ENCODE measurements at regions of chr20 and their contacts with region 1.

Region 1: DNA sequence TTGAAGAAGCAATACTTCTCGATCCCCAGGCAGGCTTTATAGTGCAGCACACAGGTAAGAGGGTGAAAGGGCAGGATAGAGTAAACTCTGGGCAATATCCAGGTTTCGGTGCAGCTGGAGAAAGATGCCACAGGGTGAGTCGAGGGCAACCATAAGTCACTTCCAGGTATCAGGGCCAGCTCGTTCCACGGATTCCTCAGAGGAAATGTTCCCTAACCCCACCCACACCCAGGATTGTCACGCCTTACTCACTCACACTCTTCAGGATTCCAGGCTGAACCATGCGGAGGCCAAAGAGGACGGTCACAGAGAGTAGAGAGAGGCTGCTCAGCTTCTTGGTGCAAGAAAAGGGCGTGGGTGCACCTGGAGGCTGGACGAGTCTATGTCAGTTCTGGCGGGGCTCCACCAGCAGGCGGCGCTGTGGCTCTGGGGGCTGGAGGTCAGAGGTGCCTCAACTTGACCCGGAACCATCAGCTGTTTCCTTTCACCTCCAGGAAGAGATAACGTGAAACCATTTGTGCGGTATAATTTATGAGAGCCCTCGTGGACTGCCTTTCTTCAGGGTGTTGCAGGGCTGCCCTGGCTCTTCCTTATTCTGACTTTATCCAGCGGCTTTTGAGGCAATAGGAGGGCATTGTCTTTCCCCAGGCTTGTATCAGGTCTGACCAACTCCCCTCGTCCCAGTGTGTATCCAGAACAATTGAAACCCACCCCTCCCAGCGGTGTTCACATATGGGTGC is 14.5 kb upstream of the WFDC12 start:
- DNase-seq: peak; percentile 56 to 99
- H3K4me3 ChIP-seq: no peak overlapping the region
- H3K27ac ChIP-seq: no peak overlapping the region
- H3K4me1 ChIP-seq: no peaks in the 10 kb centered on the region
- H3K27me3 ChIP-seq: no peaks in the 10 kb centered on the region
- CTCF ChIP-seq: peak; percentile 95 to 99 (median 97)
- EP300 ChIP-seq: no peak
- POLR2A ChIP-seq: no peak
- RAD21 ChIP-seq: peak; percentile 88 to 92

Region 2: GRCh38 chr20:45095753-45096371 is 42.9 kb before region 1 on chr20:
- CTCF ChIA-PET with region 1: interaction called, 16 read pairs
- POLR2A ChIA-PET with region 1: no interaction called
- DNase-seq: peak in 1 of 2 experiments; percentile 76
- H3K4me3 ChIP-seq: no peak overlapping the region
- H3K27ac ChIP-seq: no peak overlapping the region
- H3K4me1 ChIP-seq: peaks cover 0 to 7% (median 2%) of the 10 kb centered on the region in 4 experiments; a peak in 5 of 7 replicates
- H3K27me3 ChIP-seq: peaks cover 5 to 34% (median 28%) of the 10 kb centered on the region in 4 experiments
- CTCF ChIP-seq: peak; percentile 29 to 80 (median 79)
- EP300 ChIP-seq: no peak
- POLR2A ChIP-seq: no peak
- RAD21 ChIP-seq: peak; percentile 85 to 87

Region 3: GRCh38 chr20:45128071-45128470 is 10.7 kb before region 1 on chr20:
- CTCF ChIA-PET with region 1: interaction called, 32 read pairs
- POLR2A ChIA-PET with region 1: no interaction called
- DNase-seq: no peak
- H3K4me3 ChIP-seq: no peak overlapping the region
- H3K27ac ChIP-seq: no peak overlapping the region
- H3K4me1 ChIP-seq: no peaks in the 10 kb centered on the region
- H3K27me3 ChIP-seq: no peaks in the 10 kb centered on the region; a peak in 1 of 7 replicates
- CTCF ChIP-seq: no peak
- EP300 ChIP-seq: no peak
- POLR2A ChIP-seq: no peak
- RAD21 ChIP-seq: no peak

Region 4: DNA sequence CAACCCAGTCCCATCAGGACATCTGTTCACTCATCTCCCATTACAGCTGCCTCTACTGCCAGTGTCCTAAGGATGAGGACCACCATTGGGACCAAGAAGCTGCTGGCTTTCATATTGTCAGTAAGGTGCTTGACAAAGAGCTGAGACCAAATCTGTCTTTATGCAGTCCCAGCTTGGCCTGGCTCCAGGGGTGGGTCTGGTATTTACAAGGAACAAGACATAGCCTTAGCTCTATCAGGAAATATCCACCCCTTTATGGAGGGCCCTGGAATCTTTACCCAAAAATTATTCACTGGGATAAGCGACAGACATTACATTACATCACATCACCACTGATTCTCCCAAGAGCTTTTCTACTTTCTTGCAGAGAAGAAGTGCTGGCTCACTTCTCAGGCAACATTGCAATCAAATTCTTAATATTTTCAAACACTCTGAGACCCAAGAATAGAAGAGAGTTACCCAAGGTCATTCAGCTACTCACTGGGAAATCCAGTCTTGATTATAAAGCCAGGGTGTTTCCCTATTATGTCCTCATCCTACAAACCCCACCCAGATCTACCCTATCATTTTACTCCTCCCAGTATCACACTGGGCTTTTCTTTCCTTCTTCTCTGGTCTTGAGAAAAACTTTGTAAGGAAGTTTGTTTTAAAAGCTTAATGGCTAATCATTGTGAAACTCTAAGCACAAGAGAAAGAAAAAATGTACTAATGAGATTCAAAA is 24.5 kb after region 1 on chr20:
- CTCF ChIA-PET with region 1: interaction called, 14 read pairs
- POLR2A ChIA-PET with region 1: no interaction called
- DNase-seq: no peak
- H3K4me3 ChIP-seq: no peak overlapping the region
- H3K27ac ChIP-seq: no peak overlapping the region
- H3K4me1 ChIP-seq: no peaks in the 10 kb centered on the region
- H3K27me3 ChIP-seq: no peaks in the 10 kb centered on the region; a peak in 1 of 7 replicates
- CTCF ChIP-seq: no peak
- EP300 ChIP-seq: no peak
- POLR2A ChIP-seq: no peak
- RAD21 ChIP-seq: no peak

Region 5: DNA sequence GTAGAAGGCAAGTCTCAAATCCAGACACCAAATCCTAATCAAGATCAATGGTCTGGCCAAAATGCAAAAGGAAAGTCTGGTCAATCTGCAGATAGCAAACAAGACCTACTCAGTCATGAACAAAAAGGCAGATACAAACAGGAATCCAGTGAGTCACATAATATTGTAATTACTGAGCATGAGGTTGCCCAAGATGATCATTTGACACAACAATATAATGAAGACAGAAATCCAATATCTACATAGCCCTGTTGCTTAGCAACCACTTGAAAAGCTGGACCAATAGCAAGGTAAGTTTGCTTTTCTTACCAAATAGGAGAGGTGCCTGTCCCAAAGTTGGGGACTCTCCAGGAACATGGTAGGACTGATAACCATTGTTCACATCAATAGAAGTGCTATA is 84.4 kb after region 1 on chr20:
- CTCF ChIA-PET with region 1: interaction called, 11 read pairs
- POLR2A ChIA-PET with region 1: no interaction called
- DNase-seq: no peak
- H3K4me3 ChIP-seq: no peak overlapping the region
- H3K27ac ChIP-seq: no peak overlapping the region
- H3K4me1 ChIP-seq: no peaks in the 10 kb centered on the region
- H3K27me3 ChIP-seq: no peaks in the 10 kb centered on the region; a peak in 1 of 7 replicates
- CTCF ChIP-seq: no peak
- EP300 ChIP-seq: no peak
- POLR2A ChIP-seq: no peak
- RAD21 ChIP-seq: no peak

Region 6: DNA sequence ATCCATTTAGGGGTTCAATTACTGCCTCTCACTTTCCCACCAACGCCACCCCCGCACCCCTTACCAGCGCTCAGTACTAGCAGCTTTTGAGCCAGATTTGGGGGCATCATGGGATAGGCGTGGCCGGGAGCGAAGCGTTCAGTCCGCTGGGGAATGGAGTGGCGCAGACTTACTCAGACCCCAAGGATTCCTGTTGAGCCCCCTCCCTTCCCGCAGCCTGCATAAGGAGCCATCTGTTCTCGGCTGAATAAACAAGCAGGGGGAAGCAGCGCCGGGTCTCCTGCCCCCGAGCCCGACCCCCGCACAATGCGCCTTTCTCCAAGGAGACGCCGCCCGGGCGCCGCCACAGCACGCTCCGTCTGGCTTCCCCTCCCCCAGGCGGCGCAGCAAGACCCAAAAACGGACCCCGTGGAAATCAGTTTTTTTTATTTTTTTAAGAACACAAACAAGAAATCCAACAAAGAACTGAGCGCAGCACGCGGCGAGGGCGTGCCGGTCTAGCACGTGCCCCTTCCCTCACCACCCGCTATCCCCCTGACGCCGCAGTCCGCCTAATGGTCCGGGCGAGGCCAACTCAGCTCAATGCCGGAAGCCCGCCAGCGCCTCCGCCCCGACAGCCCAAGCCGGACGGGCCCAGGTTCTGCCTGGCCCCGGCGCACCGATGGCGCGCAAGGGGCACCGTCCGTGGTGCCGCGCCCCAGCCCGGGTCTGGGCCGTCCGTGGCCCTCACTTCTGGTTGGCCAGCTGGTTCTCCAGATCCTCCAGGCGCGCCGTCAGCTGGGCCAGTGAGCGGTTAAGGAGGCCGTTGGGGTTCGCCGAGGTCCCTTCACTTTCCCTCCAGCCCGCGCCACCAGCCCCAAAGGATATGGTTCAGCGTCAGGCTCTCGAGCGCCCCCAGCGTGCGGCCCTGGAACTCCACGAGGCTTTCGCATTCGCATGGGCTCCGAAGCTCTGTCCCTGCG is 154.6 kb after region 1 on chr20:
- CTCF ChIA-PET with region 1: interaction called, 63 read pairs
- POLR2A ChIA-PET with region 1: no interaction called
- DNase-seq: peak; percentile 64 to 99
- H3K4me3 ChIP-seq: peak overlapping the region; percentile 35 to 63 (median 54)
- H3K27ac ChIP-seq: no peak overlapping the region
- H3K4me1 ChIP-seq: peaks cover 0 to 3% (median 0%) of the 10 kb centered on the region in 4 experiments; a peak in 3 of 7 replicates
- H3K27me3 ChIP-seq: peaks cover 0 to 20% (median 11%) of the 10 kb centered on the region in 4 experiments; a peak in 6 of 7 replicates
- CTCF ChIP-seq: peak; percentile 88 to 96 (median 89)
- EP300 ChIP-seq: no peak
- POLR2A ChIP-seq: peak in 1 of 2 experiments; percentile 76; a peak in 2 of 3 replicates
- RAD21 ChIP-seq: peak; percentile 37 to 50